HEK293T (cell line): ENCODE measurements at regions of chr12 and their contacts with region 1.

Region 1: GRCh38 chr12:122471324-122472226 is 29.2 kb downstream of the ZCCHC8 start:
- DNase-seq: peak; percentile 40

Region 2: GRCh38 chr12:122486805-122487426 is 15.3 kb after region 1 on chr12:
- CTCF ChIA-PET with region 1: interaction called, 11 read pairs
- POLR2A ChIA-PET with region 1: no interaction called
- DNase-seq: no peak